Panc1 (cell line): ENCODE measurements at regions of chr19 and their contacts with region 1.

Region 1: DNA sequence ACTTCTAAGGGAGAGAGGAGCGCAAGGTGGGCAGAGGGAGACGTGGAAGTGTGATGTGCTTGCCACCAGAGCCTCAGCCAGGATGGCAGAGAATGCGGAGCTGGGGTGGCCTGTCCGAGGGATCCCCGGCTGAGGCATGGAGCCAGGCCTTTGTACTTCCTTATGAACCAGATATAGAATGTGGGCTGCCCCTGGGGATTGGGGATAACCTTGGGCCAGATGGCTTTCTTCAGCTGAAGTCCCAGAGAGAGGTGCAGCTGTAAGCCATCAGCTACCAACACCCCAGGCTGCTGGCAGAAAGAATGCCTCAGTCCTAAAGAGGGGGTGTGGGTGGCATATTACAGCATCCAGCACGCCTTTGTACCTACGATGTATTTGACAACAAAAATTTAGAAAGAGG is 25.5 kb upstream of the FBXO17 start:
- DNase-seq: no peak
- ATAC-seq: peak; percentile 44
- H3K4me3 ChIP-seq: no peak overlapping the region
- H3K27ac ChIP-seq: no peak overlapping the region
- H3K4me1 ChIP-seq: no peaks in the 10 kb centered on the region
- H3K27me3 ChIP-seq: no peaks in the 10 kb centered on the region
- CTCF ChIP-seq: no peak

Region 2: DNA sequence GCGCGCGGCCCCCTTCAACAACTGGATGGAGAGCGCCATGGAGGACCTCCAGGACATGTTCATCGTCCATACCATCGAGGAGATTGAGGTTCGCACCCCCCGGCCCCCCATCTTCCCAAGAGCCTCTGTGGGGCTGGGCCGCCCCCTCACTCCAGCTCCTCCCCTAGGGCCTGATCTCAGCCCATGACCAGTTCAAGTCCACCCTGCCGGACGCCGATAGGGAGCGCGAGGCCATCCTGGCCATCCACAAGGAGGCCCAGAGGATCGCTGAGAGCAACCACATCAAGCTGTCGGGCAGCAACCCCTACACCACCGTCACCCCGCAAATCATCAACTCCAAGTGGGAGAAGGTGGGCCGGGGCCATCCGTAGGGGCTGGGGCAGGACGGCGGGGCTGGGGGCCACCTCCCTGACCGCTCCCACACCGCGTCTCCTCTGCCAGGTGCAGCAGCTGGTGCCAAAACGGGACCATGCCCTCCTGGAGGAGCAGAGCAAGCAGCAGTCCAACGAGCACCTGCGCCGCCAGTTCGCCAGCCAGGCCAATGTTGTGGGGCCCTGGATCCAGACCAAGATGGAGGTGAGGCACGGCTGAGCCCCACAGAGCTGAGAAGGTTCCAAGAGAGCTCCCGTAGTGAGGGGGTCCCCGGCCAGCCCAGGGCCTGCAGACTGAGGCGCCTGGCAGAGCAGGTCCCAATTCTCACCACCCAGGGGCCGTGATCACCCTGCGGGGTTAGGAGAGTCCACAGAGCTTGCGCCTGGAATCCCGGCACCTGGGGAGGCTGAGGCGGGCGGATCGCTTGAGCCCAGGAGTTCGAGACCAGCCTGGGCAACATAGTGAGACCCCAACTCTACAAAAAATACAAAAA is 276.8 kb before region 1 on chr19:
- CTCF ChIA-PET with region 1: interaction called, 15 read pairs
- POLR2A ChIA-PET with region 1: no interaction called
- in situ Hi-C with region 1: no loop called
- intact Hi-C with region 1: no loop called
- DNase-seq: no peak
- ATAC-seq: no peak
- H3K4me3 ChIP-seq: no peak overlapping the region
- H3K27ac ChIP-seq: peak overlapping the region; percentile 74; the same call in 1 of the 2 replicates
- H3K4me1 ChIP-seq: peaks cover 90% of the 10 kb centered on the region
- H3K27me3 ChIP-seq: no peaks in the 10 kb centered on the region
- CTCF ChIP-seq: no peak

Region 3: GRCh38 chr19:38812841-38813320 is 188.2 kb before region 1 on chr19 and contains the start of gene LGALS4:
- CTCF ChIA-PET with region 1: no interaction called
- POLR2A ChIA-PET with region 1: no interaction called
- in situ Hi-C with region 1: no loop called
- intact Hi-C with region 1: no loop called
- DNase-seq: no peak
- ATAC-seq: peak; percentile 43
- H3K4me3 ChIP-seq: no peak within 1 kb of the TSS
- H3K27ac ChIP-seq: no peak within 1 kb of the TSS; the same call in 1 of the 2 replicates
- H3K4me1 ChIP-seq: peaks cover 4% of the 10 kb centered on the region; the same call in 1 of the 2 replicates
- H3K27me3 ChIP-seq: no peaks in the 10 kb centered on the region
- CTCF ChIP-seq: no peak
- total RNA-seq, gene LGALS4: 3.9 TPM

Region 4: GRCh38 chr19:38862321-38863059 is 138.6 kb before region 1 on chr19:
- CTCF ChIA-PET with region 1: no interaction called
- POLR2A ChIA-PET with region 1: no interaction called
- in situ Hi-C with region 1: no loop called
- intact Hi-C with region 1: no loop called
- DNase-seq: no peak
- ATAC-seq: peak; percentile 39
- H3K4me3 ChIP-seq: no peak overlapping the region
- H3K27ac ChIP-seq: no peak overlapping the region
- H3K4me1 ChIP-seq: peaks cover 17% of the 10 kb centered on the region
- H3K27me3 ChIP-seq: no peaks in the 10 kb centered on the region
- CTCF ChIP-seq: no peak

Region 5: GRCh38 chr19:38989066-38989605 is 11.9 kb before region 1 on chr19:
- CTCF ChIA-PET with region 1: interaction called, 12 read pairs
- POLR2A ChIA-PET with region 1: interaction called, 3 read pairs
- in situ Hi-C with region 1: no loop called
- intact Hi-C with region 1: no loop called
- DNase-seq: no peak
- ATAC-seq: peak; percentile 80
- H3K4me3 ChIP-seq: no peak overlapping the region
- H3K27ac ChIP-seq: peak overlapping the region; percentile 2
- H3K4me1 ChIP-seq: peaks cover 14% of the 10 kb centered on the region
- H3K27me3 ChIP-seq: no peaks in the 10 kb centered on the region
- CTCF ChIP-seq: no peak

Region 6: DNA sequence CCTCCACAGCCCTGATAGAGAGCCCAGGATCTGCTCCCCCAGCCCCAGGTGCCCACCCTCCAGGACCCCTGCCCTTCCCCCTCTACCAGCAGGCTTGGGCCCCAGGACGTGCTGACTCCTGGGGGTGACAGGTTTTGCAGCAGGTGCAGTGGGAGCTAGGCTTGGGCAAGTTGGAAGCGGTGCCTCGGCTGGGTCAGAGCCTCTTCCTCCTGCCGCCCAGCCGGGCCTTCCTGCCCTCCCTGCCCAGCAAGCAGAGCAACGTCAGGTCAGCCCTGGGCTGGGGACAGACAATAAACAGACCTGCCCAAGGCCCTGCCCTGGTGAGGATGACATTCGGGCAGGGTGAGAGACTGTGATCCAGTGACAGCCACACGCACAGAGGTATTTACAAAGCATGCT is 186.5 kb after region 1 on chr19:
- CTCF ChIA-PET with region 1: no interaction called
- POLR2A ChIA-PET with region 1: no interaction called
- in situ Hi-C with region 1: no loop called
- intact Hi-C with region 1: no loop called
- DNase-seq: no peak
- ATAC-seq: peak; percentile 40
- H3K4me3 ChIP-seq: no peak overlapping the region
- H3K27ac ChIP-seq: no peak overlapping the region
- H3K4me1 ChIP-seq: no peaks in the 10 kb centered on the region; the same call in 1 of the 2 replicates
- H3K27me3 ChIP-seq: no peaks in the 10 kb centered on the region
- CTCF ChIP-seq: no peak

Region 7: GRCh38 chr19:39563408-39563807 is 562.4 kb after region 1 on chr19:
- CTCF ChIA-PET with region 1: no interaction called
- POLR2A ChIA-PET with region 1: no interaction called
- in situ Hi-C with region 1: no loop called
- intact Hi-C with region 1: no loop called
- DNase-seq: peak; percentile 81
- ATAC-seq: peak; percentile 10
- H3K4me3 ChIP-seq: no peak overlapping the region
- H3K27ac ChIP-seq: no peak overlapping the region
- H3K4me1 ChIP-seq: peaks cover 3% of the 10 kb centered on the region
- H3K27me3 ChIP-seq: peaks cover 74% of the 10 kb centered on the region
- CTCF ChIP-seq: no peak